ENCODE measurements at regions of chr17 and their contacts with region 1.

Region 1: DNA sequence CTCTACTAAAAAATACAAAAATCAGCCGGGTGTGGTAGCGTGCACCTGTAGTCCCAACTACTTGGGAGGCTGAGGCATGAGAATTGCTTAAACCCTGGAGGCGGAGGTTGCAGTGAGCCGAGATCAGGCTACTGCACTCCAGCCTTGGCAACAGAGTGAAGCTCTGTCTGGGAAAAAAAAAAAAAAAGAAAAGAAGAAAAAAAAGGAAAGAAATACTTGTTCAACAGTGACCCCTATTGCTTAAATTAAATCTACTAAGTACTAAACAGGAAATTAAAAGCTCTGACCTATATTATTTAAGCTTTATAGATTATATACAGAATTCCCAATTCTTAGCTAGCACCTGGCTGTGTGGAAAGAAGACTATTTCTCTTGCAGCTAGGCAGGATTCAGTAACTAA is 48.9 kb downstream of the FBXL20 start:
- DNase-seq: no peak
- CTCF ChIP-seq: no peak

Region 2: GRCh38 chr17:39306509-39307212 is 45.9 kb before region 1 on chr17:
- CTCF ChIA-PET with region 1: no interaction called
- POLR2A ChIA-PET with region 1: no interaction called
- DNase-seq: peak; percentile 54
- CTCF ChIP-seq: no peak

Region 3: GRCh38 chr17:39335704-39336223 is 16.7 kb before region 1 on chr17:
- CTCF ChIA-PET with region 1: interaction called, 11 read pairs
- POLR2A ChIA-PET with region 1: no interaction called
- DNase-seq: no peak
- CTCF ChIP-seq: no peak

Region 4: DNA sequence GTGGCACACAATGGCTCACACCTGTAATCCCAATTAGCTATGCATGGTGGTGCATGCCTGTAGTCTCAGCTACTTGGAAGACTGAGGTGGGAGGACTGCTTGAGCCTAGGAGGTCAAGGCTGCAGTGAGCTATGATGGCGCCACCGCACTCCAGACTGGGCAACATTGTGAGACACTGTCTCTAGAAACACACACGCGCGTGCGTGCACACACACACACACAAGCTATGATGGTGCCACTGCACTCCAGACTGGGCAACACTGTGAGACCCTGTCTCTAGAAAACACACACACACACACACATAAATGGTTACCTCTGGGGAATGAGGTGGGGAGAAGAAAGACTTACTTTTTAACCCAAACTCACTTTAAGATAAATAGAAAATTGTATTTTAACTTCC is 32.5 kb after region 1 on chr17:
- CTCF ChIA-PET with region 1: no interaction called
- POLR2A ChIA-PET with region 1: no interaction called
- DNase-seq: no peak
- CTCF ChIP-seq: no peak